Common myeloid progenitor, CD34-positive (primary cell): ENCODE measurements at regions of chr9 and their contacts with region 1.

Region 1: GRCh38 chr9:96856363-96857286 is 2.3 kb upstream of the ZNF782 start:
- DNase-seq: peak; percentile 64 to 84 (median 80)
- H3K4me3 ChIP-seq: no peak overlapping the region
- H3K27ac ChIP-seq: no peak overlapping the region
- H3K4me1 ChIP-seq: peaks cover 4 to 18% (median 17%) of the 10 kb centered on the region in 4 experiments
- H3K27me3 ChIP-seq: peaks cover 0 to 12% (median 0%) of the 10 kb centered on the region in 5 experiments

Region 2: DNA sequence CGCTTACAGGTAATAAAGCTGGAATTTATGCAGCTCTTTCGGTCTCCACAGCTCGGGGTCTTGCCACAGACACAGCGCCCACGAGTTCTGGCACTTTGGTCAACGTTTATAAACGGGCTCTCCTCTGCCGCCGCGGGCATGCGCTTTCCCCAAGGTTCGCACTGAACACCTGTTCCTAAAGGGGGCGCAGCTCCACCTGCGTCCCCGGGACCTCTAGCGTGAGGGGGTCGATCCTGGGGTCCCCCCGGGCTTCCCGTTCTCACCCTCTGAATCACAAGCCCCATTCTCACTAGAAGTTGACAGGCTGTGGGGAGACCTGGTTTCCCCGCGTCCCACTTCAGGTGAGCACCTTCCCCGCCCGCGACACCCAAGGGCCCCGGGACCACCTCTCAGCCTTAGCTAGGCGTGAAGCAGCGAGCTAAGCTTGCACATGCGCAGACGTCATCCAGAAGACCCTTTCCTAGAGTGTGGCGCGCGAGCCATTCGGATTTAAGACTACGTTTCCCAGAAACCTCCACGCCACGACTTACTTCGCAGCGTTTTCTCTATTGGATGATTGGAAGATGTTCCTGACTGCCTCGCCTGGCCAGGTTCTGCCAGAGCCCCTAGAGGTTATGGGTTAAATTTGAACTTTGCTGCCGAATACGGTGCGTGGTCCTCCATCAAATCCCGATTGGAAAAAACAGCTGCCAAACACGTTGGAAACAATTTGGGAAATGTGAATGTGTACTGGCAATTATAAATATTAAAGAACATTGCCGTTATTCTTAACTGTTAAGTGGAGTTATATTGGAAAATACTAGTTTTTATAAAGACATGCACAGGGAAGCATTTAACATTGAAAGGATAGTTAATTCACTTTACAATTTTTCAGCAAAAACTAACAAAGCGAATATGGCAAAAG is 19.1 kb after region 1 on chr9:
- CTCF ChIA-PET with region 1: interaction called, 13 read pairs
- POLR2A ChIA-PET with region 1: no interaction called
- DNase-seq: peak; percentile 79 to 87 (median 84)
- H3K4me3 ChIP-seq: peak overlapping the region; percentile 42 to 84 (median 66)
- H3K27ac ChIP-seq: no peak overlapping the region
- H3K4me1 ChIP-seq: peaks cover 8 to 19% (median 17%) of the 10 kb centered on the region in 4 experiments
- H3K27me3 ChIP-seq: peaks cover 0 to 58% (median 15%) of the 10 kb centered on the region in 5 experiments

Region 3: DNA sequence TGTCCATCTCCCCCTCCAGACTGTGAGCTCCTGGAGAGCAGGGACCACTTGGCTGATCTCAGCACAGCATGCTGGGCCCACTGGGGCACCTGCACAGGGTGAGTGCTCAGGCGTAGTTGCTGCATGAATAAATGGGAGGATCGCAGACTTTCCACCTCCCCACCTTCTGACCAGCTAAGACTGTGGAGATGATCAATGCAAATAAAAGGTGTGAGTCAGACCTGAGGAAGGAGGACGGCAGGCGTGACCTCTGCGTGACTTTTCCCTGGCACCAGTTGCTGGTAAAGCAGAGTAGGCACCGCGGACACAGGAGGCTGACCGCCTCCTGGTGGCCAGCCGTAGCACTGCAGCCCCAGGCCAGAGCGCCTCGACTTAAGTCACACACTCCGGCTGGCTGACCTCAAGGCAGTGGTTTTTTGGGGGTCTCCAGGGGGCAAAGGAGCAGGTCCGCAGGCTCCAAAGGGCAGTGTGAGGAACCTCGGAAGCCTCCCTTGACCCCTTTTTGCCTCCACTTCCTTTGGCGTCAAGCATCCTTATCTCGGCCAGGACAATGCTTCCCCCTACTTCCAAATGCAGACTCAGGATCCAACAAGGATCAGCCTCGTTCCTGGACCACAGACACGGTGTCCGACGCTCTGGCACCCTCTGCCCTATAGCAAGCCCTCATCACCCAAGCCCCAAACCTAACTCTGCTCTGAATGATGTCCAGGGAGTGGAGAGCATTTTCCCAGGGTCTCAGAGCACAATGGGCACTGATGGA is 542.6 kb after region 1 on chr9:
- CTCF ChIA-PET with region 1: interaction called, 33 read pairs
- POLR2A ChIA-PET with region 1: no interaction called
- DNase-seq: peak; percentile 65 to 73 (median 69)
- H3K4me3 ChIP-seq: no peak overlapping the region
- H3K27ac ChIP-seq: no peak overlapping the region
- H3K4me1 ChIP-seq: no peaks in the 10 kb centered on the region
- H3K27me3 ChIP-seq: no peaks in the 10 kb centered on the region